SK-N-SH (cell line): ENCODE measurements at regions of chr9 and their contacts with region 1.

Region 1: DNA sequence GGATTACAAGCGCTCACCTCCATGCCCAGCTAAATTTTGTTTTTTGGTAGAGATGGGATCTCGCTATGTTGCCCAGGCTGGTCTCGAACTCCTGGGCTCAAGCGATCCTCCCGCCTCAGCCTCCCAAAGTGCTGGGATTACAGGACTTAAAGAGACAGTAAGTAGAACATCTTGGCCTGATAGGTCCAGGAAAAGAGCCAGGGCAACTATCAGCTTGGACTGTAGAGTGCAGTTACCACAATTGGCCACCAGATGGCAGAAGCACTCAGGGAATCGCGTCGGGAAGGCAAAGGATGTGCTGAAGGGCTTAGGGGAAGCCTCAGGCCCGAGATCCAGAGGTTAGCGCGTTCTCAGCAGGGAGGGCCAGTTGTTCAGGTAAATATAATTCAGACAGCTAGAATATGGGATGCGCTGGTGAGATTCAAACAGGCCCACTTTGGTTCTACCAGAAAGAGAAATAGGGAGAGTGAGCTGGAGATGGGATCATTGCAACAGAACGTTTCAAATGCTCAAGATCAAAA is 21.5 kb downstream of the C9orf57 start:
- DNase-seq: peak; percentile 73
- H3K4me3 ChIP-seq: no peak overlapping the region; a peak in 1 of 4 replicates
- H3K27ac ChIP-seq: no peak overlapping the region
- H3K4me1 ChIP-seq: no peaks in the 10 kb centered on the region; a peak in 1 of 4 replicates
- H3K27me3 ChIP-seq: peaks cover 15% of the 10 kb centered on the region
- CTCF ChIP-seq: peak; percentile 89
- EP300 ChIP-seq: no peak
- RAD21 ChIP-seq: peak; percentile 91

Region 2: GRCh38 chr9:71806901-71807307 is 232.0 kb before region 1 on chr9:
- CTCF ChIA-PET with region 1: interaction called, 12 read pairs
- POLR2A ChIA-PET with region 1: no interaction called
- DNase-seq: peak; percentile 54
- H3K4me3 ChIP-seq: peak overlapping the region in 1 of 2 experiments; percentile 38; a peak in 1 of 4 replicates
- H3K27ac ChIP-seq: no peak overlapping the region
- H3K4me1 ChIP-seq: no peaks in the 10 kb centered on the region
- H3K27me3 ChIP-seq: peaks cover 32% of the 10 kb centered on the region; the same call in 1 of the 2 replicates
- CTCF ChIP-seq: peak; percentile 84
- EP300 ChIP-seq: no peak
- RAD21 ChIP-seq: peak; percentile 87

Region 3: DNA sequence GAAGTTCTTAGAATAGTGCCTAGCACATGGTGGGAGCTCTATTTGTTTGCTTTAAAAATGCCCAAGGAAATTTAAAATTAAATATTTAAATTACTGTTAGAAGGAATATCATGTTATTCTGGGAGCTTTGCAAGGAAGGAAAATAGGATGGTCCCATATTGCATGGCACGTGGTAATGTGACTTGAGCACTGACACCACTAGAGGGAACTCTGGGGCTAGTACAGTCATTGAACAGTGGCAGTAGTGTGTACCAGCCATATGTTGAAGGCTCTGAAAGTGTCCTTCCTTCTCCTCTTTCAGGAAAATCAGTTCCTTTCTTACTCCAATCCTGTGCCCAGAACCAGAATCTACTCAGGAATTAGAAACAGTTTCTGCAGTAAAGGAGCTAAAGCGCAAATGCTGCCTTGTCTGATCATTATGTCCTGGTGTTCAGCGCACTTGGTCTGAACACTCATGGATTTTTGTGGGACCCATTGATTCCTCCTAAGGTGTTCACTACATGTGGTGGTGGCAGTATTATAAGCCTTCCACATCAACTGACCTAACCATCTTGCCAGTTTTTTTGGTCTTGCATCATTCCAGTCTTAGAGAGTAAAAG is 164.4 kb after region 1 on chr9:
- CTCF ChIA-PET with region 1: interaction called, 11 read pairs
- POLR2A ChIA-PET with region 1: no interaction called
- DNase-seq: peak; percentile 31
- H3K4me3 ChIP-seq: no peak overlapping the region
- H3K27ac ChIP-seq: no peak overlapping the region
- H3K4me1 ChIP-seq: no peaks in the 10 kb centered on the region
- H3K27me3 ChIP-seq: no peaks in the 10 kb centered on the region; the same call in 1 of the 2 replicates
- CTCF ChIP-seq: peak; percentile 56
- EP300 ChIP-seq: no peak
- RAD21 ChIP-seq: peak; percentile 49

Region 4: DNA sequence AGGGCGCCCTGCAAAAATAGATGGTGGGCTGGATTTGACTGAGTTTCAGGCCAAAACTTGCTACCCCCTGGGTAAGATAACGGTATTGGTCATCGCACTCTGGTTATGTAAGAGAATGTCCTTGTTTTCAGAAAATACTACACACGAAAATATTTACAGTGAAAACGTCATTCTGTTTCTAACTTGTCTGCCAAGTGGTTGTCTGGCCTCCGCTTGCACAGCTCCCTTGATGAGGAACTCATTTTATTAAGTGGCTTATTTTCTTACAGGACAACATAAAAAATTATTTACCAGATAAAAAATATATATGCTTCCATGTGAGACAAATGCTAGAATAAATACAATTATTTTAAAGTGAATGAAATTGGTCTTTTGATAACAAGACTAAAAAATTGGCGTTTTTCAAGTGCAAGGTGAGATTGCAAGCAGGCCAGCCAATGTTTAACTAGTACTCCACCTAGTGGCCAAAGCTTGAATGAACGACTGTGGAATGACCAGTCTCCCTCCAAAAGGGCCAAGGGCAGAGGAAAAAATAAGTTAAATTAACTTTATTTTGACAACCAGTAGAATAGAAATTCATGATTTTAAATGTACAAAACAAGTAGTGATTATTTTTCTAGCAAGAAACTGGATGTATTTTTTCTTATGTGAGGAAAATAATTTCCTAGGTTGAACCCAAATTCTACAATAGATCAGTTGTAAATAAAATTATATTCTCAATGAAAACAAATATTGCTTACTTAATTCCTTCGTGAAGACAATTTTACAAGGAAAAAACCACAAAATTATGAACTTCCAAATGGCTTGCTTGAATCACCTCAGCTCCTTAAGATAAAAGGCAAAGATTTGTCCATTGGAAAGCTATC is 232.9 kb after region 1 on chr9:
- CTCF ChIA-PET with region 1: interaction called, 159 read pairs
- POLR2A ChIA-PET with region 1: no interaction called
- DNase-seq: peak; percentile 50
- H3K4me3 ChIP-seq: no peak overlapping the region; a peak in 1 of 4 replicates
- H3K27ac ChIP-seq: no peak overlapping the region
- H3K4me1 ChIP-seq: no peaks in the 10 kb centered on the region
- H3K27me3 ChIP-seq: peaks cover 34% of the 10 kb centered on the region
- CTCF ChIP-seq: peak; percentile 89
- EP300 ChIP-seq: no peak
- RAD21 ChIP-seq: peak; percentile 75

Region 5: GRCh38 chr9:72280913-72281500 is 242.1 kb after region 1 on chr9:
- CTCF ChIA-PET with region 1: interaction called, 159 read pairs
- POLR2A ChIA-PET with region 1: no interaction called
- DNase-seq: peak; percentile 59
- H3K4me3 ChIP-seq: peak overlapping the region in 1 of 2 experiments; percentile 47; a peak in 1 of 4 replicates
- H3K27ac ChIP-seq: no peak overlapping the region
- H3K4me1 ChIP-seq: no peaks in the 10 kb centered on the region
- H3K27me3 ChIP-seq: peaks cover 38% of the 10 kb centered on the region; the same call in 1 of the 2 replicates
- CTCF ChIP-seq: peak; percentile 98
- EP300 ChIP-seq: no peak
- RAD21 ChIP-seq: peak; percentile 90